Mammary epithelial cell (primary cell): ENCODE measurements at regions of chr16 and their contacts with region 1.

Region 1: DNA sequence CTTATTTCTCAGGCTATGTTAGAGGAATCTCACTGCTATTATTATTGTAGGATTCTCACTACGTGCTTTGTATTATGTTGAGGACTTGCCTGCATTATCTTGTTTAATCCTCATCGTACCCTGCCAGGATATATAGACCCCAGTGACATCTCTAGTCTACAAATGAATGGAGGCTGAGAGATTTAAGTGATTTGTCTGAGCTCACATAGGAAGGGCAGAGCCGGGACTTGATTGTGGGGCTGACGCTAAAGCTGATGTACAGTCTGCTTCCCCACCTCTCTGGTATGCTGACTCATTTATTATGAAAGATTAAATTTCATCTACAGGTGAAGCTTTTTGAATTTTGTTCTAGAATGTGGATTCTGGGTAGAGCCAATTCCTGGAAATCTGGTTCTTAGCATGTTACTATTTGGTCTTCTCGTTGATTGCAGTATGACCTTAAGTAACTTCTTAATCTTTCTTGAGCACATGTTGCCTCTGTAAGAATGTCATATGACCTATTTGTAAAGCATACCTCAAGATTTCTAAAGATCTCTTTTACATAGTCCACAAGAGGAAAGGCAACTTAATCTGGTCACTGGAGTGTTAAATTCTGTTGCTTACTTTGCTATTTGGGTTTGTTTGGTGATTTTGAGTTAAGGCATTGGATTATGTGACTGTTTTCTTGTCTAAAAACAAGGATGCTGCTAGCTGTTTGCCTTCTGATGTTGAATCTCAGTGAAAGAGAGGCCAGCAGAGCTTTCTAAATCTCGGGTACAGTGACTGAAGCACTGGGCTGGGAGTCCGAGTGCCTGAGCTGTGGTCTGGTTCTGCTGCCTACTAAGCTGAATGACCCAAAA is 12.4 kb downstream of the METTL9 start:
- DNase-seq: no peak
- H3K4me3 ChIP-seq: no peak overlapping the region
- H3K27ac ChIP-seq: no peak overlapping the region
- H3K4me1 ChIP-seq: peaks cover 15% of the 10 kb centered on the region
- H3K27me3 ChIP-seq: no peaks in the 10 kb centered on the region
- CTCF ChIP-seq: no peak

Region 2: GRCh38 chr16:21599233-21600030 is 12.3 kb before region 1 on chr16 and contains the start of gene METTL9:
- CTCF ChIA-PET with region 1: no interaction called
- dilution Hi-C with region 1: no loop called
- in situ Hi-C with region 1: no loop called
- intact Hi-C with region 1: loop called (anchors 1 kb)
- DNase-seq: peak; percentile 94
- H3K4me3 ChIP-seq: peak within 1 kb of the TSS; percentile 70 to 92 (median 78)
- H3K27ac ChIP-seq: peak within 1 kb of the TSS; percentile 73
- H3K4me1 ChIP-seq: peaks cover 12% of the 10 kb centered on the region
- H3K27me3 ChIP-seq: no peaks in the 10 kb centered on the region
- CTCF ChIP-seq: no peak
- total RNA-seq, gene METTL9: 86.1 to 131 TPM